ENCODE measurements at regions of chr1 and their contacts with region 1.

Region 1: DNA sequence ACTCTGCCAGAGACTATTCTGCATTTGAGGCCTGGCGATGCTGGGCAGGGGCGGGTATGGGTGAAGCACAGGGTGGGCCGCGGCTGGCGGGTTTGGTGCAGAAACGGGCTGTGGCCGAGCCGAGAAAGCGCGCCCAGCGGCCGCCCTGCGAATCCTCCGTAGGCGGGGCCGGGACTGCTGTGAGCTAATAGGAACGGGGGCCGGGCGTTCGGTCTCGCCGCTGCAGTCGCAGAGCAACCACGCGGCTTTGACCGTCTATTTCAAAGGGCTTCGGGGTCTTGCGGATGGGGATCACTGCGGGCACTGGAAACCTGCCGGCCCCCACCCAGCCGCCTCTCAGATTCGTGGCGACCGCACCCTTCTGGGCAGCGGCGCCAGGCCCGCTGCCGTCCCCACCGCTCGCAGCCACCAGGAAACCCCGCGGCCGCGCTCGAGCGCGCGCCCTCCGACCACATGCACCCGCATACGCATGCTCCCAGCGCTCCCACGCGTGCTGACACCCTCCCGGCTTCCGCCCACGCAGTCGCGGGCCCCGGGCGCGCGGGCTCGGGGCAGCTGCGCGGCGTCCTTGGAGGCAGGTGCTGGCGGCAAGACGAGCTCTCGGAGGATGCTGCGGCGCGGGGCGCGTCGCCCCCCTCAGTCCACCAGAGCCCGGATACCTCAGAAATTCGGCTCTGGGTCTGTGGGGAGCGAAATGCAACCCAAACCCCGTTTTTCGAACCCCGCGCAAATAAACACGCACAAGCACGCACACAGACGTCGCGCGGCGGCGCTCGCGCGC is 32.6 kb downstream of the DNTTIP2 start:
- DNase-seq: peak; percentile 79 to 80
- ATAC-seq: peak; percentile 57 to 65
- H3K4me3 ChIP-seq: peak overlapping the region; percentile 71 to 91 (median 88)
- H3K27ac ChIP-seq: peak overlapping the region; percentile 95 to 98 (median 98)
- H3K4me1 ChIP-seq: peaks cover 12 to 19% of the 10 kb centered on the region in 2 donors
- H3K27me3 ChIP-seq: no peaks in the 10 kb centered on the region
- CTCF ChIP-seq: peak; percentile 22 to 64 (median 33)
- POLR2A ChIP-seq: peak; percentile 66 to 67

Region 2: GRCh38 chr1:93304716-93305138 is 541.7 kb before region 1 on chr1:
- in situ Hi-C with region 1: loop called in 3 of 4 experiments (anchors 25 kb)
- intact Hi-C with region 1: loop called (anchors 2 kb)
- DNase-seq: peak in 1 of 2 donors; percentile 10
- ATAC-seq: peak; percentile 65 to 79
- H3K4me3 ChIP-seq: no peak overlapping the region
- H3K27ac ChIP-seq: no peak overlapping the region
- H3K4me1 ChIP-seq: peaks cover 0 to 2% of the 10 kb centered on the region in 2 donors
- H3K27me3 ChIP-seq: no peaks in the 10 kb centered on the region
- CTCF ChIP-seq: peak; percentile 66 to 92 (median 75)
- POLR2A ChIP-seq: no peak

Region 3: DNA sequence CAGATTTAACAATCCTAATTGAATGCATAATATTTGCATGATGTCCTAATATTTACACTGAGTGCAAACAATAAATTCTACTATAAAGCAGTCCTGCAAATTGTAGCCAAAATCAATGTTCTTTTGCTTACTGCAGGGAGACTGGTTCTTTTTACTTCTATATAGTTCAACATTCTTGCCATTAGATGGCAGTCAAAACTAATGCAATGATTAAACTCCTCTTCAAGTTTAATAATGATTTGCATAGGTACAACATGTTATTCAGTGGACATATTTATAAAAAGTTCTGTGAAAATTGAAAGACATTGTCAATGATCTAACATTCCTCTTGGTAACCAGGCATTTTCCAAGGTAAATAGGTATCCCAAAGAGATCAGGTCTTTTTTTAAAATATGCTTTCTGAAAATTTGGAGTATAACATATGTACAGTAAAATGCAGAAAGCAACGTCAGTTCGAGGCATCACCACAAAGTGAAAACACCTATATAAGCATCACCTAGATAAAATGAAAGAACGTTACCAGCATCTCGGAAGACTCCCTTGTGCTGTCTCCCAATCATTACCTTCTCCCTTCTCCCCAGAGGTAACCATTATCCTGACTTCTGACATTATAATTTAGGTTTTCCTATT is 408.3 kb before region 1 on chr1:
- in situ Hi-C with region 1: loop called in 2 of 4 experiments (anchors 25 kb)
- intact Hi-C with region 1: loop called (anchors 2 kb)
- DNase-seq: no peak
- ATAC-seq: peak; percentile 72 to 75
- H3K4me3 ChIP-seq: no peak overlapping the region
- H3K27ac ChIP-seq: no peak overlapping the region
- H3K4me1 ChIP-seq: no peaks in the 10 kb centered on the region
- H3K27me3 ChIP-seq: no peaks in the 10 kb centered on the region
- CTCF ChIP-seq: peak; percentile 38 to 74 (median 68)
- POLR2A ChIP-seq: no peak

Region 4: DNA sequence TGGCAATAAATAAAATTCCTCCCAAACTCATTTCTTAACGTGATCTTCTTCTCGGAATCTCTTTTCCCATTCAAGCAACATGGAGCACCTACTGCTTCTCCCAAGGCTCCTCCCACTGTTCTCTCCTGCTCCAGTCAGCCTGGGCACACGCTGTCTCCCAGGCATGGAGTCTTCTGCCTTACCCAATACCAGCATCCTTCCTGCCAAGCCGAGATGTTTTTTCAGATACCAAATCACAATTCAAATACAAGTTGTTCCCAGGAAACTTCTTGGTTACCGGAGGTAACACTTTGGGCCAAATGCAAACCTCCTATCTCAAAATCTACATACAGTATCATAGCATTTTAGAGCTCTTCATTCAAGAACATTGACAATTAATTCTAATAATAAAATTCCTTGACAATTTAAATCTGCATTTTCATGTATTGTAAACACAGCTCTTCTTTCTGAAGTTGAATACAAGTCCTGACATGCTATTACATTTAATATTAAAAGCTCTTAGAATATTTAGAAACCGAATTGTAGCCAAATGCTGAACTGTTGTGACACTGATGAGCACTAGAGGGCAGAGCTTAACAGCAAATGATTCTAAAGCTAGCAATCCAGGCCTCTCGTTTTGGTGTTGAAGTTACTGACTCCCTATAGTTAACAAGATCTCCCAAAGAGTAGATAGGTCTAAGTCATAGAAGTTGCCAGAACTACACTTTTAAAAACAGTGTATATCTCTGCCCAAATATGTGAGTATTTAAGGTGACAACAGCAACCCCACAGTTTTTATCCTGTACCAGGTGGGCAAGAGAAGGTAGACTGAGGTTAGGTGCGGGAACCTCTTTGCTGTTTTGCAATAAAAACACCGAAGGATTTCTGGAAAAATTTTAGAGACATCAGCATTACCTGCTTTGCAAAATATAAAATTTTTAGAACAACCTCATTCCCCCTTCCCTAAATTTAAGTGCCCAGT is 217.0 kb before region 1 on chr1:
- in situ Hi-C with region 1: no loop called
- intact Hi-C with region 1: loop called (anchors 1 kb)
- DNase-seq: peak; percentile 55 to 62
- ATAC-seq: peak; percentile 83 to 90
- H3K4me3 ChIP-seq: no peak overlapping the region
- H3K27ac ChIP-seq: peak overlapping the region in 3 of 4 donors; percentile 18 to 77 (median 37)
- H3K4me1 ChIP-seq: peaks cover under 1 to 8% of the 10 kb centered on the region in 2 donors
- H3K27me3 ChIP-seq: no peaks in the 10 kb centered on the region
- CTCF ChIP-seq: peak; percentile 75 to 93 (median 80)
- POLR2A ChIP-seq: no peak

Region 5: DNA sequence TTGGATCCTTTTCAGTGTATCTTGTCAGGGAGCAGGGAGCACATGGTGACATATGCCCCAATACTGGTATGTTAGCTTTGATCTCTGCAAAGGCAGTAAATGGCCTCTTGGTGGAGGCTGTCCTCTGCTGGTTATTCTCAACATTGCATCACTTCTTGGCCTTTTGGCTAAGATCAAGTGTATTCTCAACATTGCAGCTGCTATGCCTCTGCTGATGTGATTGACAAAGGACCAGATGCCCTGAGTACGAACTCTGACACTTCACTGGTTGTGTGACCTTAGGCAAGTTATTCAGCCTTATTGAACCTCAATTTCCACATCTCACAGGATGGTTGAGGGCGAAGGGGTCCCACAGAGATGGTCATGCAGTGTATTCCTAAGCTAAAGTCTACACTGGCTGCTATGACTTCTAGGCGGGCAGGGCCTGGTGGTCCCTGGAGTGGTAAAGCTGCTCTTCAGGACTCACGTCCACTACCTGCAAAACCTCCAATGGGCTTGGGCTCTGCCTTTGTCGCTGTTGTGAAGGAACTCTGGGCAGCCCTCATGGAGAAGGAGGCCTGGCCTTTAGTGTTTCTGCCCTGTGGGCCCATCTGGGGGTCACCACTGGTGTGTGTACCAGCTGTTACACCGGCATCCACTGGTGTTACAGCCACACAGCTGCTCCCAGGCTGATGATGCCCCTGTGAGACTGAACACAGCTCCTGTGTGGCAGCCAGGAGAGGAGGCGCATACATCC is 32.2 kb before region 1 on chr1:
- in situ Hi-C with region 1: no loop called
- intact Hi-C with region 1: loop called (anchors 2 kb)
- DNase-seq: peak; percentile 17 to 39
- ATAC-seq: peak; percentile 84 to 90
- H3K4me3 ChIP-seq: no peak overlapping the region
- H3K27ac ChIP-seq: no peak overlapping the region
- H3K4me1 ChIP-seq: peaks cover 0 to 3% of the 10 kb centered on the region in 2 donors
- H3K27me3 ChIP-seq: no peaks in the 10 kb centered on the region
- CTCF ChIP-seq: peak; percentile 84 to 93 (median 92)
- POLR2A ChIP-seq: no peak

Region 6: GRCh38 chr1:93909146-93910050 is 63.0 kb after region 1 on chr1 and contains the start of gene GCLM:
- in situ Hi-C with region 1: no loop called
- intact Hi-C with region 1: loop called (anchors 1 kb)
- DNase-seq: peak; percentile 84 to 90
- ATAC-seq: peak; percentile 92 to 98
- H3K4me3 ChIP-seq: peak within 1 kb of the TSS; percentile 66 to 76 (median 72)
- H3K27ac ChIP-seq: peak within 1 kb of the TSS; percentile 79 to 89 (median 84)
- H3K4me1 ChIP-seq: peaks cover 14 to 27% of the 10 kb centered on the region in 2 donors
- H3K27me3 ChIP-seq: no peaks in the 10 kb centered on the region
- CTCF ChIP-seq: peak; percentile 79 to 98 (median 97)
- POLR2A ChIP-seq: peak; percentile 60 to 64
- total RNA-seq, gene GCLM: 20.9 to 26.7 (median 24.1) TPM

Region 7: GRCh38 chr1:94417978-94418663 is 571.7 kb after region 1 on chr1 and contains the start of gene ABCD3:
- in situ Hi-C with region 1: no loop called
- intact Hi-C with region 1: loop called (anchors 5 kb)
- DNase-seq: peak; percentile 93 to 97
- ATAC-seq: peak; percentile 89 to 91
- H3K4me3 ChIP-seq: peak within 1 kb of the TSS; percentile 91 to 98 (median 94)
- H3K27ac ChIP-seq: peak within 1 kb of the TSS; percentile 86 to 93 (median 88)
- H3K4me1 ChIP-seq: peaks cover 33 to 37% of the 10 kb centered on the region in 2 donors
- H3K27me3 ChIP-seq: no peaks in the 10 kb centered on the region
- CTCF ChIP-seq: no peak
- POLR2A ChIP-seq: peak; percentile 83 to 91
- total RNA-seq, gene ABCD3: 33.4 to 42.8 (median 36.6) TPM